ENCODE measurements at regions of chr2 and their contacts with region 1.

Region 1: DNA sequence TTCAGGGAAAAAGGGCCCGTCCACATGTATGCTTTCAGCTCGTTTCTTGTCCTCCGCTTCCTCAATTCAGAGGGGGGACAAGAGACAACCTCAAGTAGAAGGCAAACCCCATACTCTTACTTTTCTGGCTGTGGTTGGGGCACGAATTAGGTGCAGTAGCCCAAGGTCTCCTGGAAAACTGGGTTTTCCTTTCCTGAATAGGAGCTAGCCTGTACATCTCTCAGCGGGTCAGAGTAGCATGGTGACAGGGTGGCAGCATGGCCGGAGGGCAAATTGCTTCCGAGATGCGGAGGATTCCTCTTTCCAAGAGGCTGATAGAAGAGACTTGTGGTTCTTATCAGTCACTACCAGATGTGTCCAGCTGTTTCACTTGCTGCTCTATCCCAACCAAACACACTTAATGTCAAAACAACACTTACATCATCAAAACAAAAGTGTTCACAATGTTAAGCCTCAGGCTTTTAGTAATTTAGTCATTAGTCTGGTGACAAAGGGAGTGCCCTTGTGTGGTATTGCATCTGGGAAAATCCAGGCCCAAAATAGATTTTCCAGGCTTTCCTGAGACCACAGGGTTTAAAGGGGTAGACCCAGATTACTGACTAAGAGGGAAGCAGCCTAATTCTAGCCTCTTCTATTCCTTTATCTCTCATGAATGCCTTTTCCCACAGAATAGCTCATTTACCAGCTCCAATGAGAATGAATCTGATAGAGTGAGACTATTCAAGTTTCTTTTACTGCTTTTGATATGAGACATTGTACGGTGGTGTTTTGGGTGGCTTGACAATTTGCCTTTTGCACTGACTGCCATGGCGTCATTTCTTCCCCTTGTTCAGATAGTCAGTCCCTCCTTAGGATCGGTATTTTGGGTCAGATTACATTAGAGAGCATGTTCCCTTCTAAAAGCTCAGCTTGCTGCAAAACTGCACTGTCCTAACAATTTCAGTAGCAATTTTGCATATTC is 162.0 kb downstream of the LTBP1 start:
- DNase-seq: no peak
- H3K4me3 ChIP-seq: no peak overlapping the region
- H3K4me3 Mint-ChIP-seq: no peak overlapping the region
- H3K27ac Mint-ChIP-seq: no peak overlapping the region
- H3K4me1 ChIP-seq: peaks cover 22% of the 10 kb centered on the region
- H3K4me1 Mint-ChIP-seq: peaks cover 7% of the 10 kb centered on the region
- H3K27me3 ChIP-seq: no peaks in the 10 kb centered on the region
- H3K27me3 Mint-ChIP-seq: no peaks in the 10 kb centered on the region
- CTCF ChIP-seq: no peak

Region 2: GRCh38 chr2:33340280-33340679 is 231.5 kb after region 1 on chr2:
- CTCF ChIA-PET with region 1: no interaction called
- POLR2A ChIA-PET with region 1: no interaction called
- intact Hi-C with region 1: no loop called
- DNase-seq: no peak
- H3K4me3 ChIP-seq: no peak overlapping the region
- H3K4me3 Mint-ChIP-seq: no peak overlapping the region
- H3K27ac Mint-ChIP-seq: no peak overlapping the region
- H3K4me1 ChIP-seq: no peaks in the 10 kb centered on the region
- H3K4me1 Mint-ChIP-seq: no peaks in the 10 kb centered on the region
- H3K27me3 ChIP-seq: no peaks in the 10 kb centered on the region
- H3K27me3 Mint-ChIP-seq: no peaks in the 10 kb centered on the region
- CTCF ChIP-seq: no peak

Region 3: GRCh38 chr2:33372940-33373553 is 264.3 kb after region 1 on chr2:
- CTCF ChIA-PET with region 1: no interaction called
- POLR2A ChIA-PET with region 1: no interaction called
- intact Hi-C with region 1: loop called (anchors 10 kb)
- DNase-seq: peak in 1 of 2 experiments; percentile 53
- H3K4me3 ChIP-seq: no peak overlapping the region
- H3K4me3 Mint-ChIP-seq: no peak overlapping the region
- H3K27ac Mint-ChIP-seq: no peak overlapping the region
- H3K4me1 ChIP-seq: no peaks in the 10 kb centered on the region
- H3K4me1 Mint-ChIP-seq: no peaks in the 10 kb centered on the region
- H3K27me3 ChIP-seq: no peaks in the 10 kb centered on the region
- H3K27me3 Mint-ChIP-seq: no peaks in the 10 kb centered on the region
- CTCF ChIP-seq: peak; percentile 74 to 75

Measured in Caco-2 (cell line).